ENCODE measurements at regions of chr18 and their contacts with region 1.

Region 1: DNA sequence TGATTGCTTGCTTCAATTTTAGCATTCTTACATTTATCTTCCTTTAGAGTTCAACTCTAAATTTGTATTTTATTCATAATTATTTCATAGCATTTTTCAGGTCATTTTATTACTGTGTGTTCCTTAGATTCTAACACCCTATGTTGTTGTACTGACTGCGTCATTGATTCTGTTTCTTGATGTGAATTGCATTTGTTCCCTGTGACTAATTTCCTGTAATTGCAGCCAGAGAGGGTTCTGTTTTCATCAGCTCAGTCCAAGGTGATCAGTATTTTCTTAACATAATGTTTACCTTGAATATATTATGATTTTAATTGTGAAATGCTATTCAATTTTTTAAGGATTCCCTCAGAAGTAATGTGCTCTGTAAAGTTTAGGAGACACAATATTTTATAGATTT is 970.2 kb upstream of the PIK3C3 start:
- DNase-seq: no peak
- ATAC-seq: no peak
- H3K4me3 ChIP-seq: no peak overlapping the region
- H3K4me3 Mint-ChIP-seq: no peak overlapping the region
- H3K27ac ChIP-seq: no peak overlapping the region
- H3K27ac Mint-ChIP-seq: no peak overlapping the region
- H3K4me1 ChIP-seq: no peaks in the 10 kb centered on the region
- H3K4me1 Mint-ChIP-seq: no peaks in the 10 kb centered on the region
- H3K27me3 ChIP-seq: no peaks in the 10 kb centered on the region
- H3K27me3 Mint-ChIP-seq: no peaks in the 10 kb centered on the region
- CTCF ChIP-seq: no peak

Region 2: DNA sequence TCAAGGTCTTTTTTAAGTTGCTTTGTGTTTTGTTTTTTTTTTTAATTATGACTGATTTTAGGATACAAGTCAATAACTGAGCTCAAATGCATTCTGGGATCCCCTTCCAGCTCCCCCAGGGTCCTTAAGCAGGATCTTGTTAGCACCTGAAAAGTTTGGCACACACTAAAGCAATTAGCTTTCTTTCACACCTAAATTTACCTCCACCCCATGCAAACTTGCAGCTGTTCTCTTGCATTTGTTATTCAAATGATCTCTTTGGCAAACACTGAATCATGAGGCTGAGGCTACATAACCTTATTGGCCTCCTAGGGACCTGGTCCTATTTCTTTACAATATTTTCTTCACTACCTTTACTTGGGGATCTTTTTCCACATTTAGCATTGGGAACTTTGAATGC is 1393.2 kb before region 1 on chr18:
- CTCF ChIA-PET with region 1: no interaction called
- POLR2A ChIA-PET with region 1: no interaction called
- intact Hi-C with region 1: loop called in 1 of 2 experiments (anchors 10 kb)
- DNase-seq: no peak
- ATAC-seq: no peak
- H3K4me3 ChIP-seq: no peak overlapping the region
- H3K4me3 Mint-ChIP-seq: no peak overlapping the region
- H3K27ac ChIP-seq: no peak overlapping the region
- H3K27ac Mint-ChIP-seq: no peak overlapping the region
- H3K4me1 ChIP-seq: no peaks in the 10 kb centered on the region
- H3K4me1 Mint-ChIP-seq: no peaks in the 10 kb centered on the region
- H3K27me3 ChIP-seq: no peaks in the 10 kb centered on the region
- H3K27me3 Mint-ChIP-seq: no peaks in the 10 kb centered on the region
- CTCF ChIP-seq: no peak

Measured in CD4-positive, alpha-beta T cell (primary cell).